ENCODE measurements at regions of chr9 and their contacts with region 1.

Region 1: GRCh38 chr9:108850293-108850897 is 5.4 kb downstream of the ACTL7B start:
- DNase-seq: peak; percentile 37
- H3K4me3 ChIP-seq: no peak overlapping the region
- H3K27ac ChIP-seq: no peak overlapping the region
- H3K4me1 ChIP-seq: peaks cover 2% of the 10 kb centered on the region
- H3K27me3 ChIP-seq: no peaks in the 10 kb centered on the region
- CTCF ChIP-seq: peak; percentile 54 to 76

Region 2: GRCh38 chr9:108885643-108886348 is 35.4 kb after region 1 on chr9:
- CTCF ChIA-PET with region 1: no interaction called
- dilution Hi-C with region 1: no loop called
- in situ Hi-C with region 1: no loop called
- intact Hi-C with region 1: loop called (anchors 5 kb)
- DNase-seq: peak; percentile 80
- H3K4me3 ChIP-seq: no peak overlapping the region
- H3K27ac ChIP-seq: peak overlapping the region; percentile 5
- H3K4me1 ChIP-seq: peaks cover 10% of the 10 kb centered on the region
- H3K27me3 ChIP-seq: no peaks in the 10 kb centered on the region
- CTCF ChIP-seq: no peak

Region 3: DNA sequence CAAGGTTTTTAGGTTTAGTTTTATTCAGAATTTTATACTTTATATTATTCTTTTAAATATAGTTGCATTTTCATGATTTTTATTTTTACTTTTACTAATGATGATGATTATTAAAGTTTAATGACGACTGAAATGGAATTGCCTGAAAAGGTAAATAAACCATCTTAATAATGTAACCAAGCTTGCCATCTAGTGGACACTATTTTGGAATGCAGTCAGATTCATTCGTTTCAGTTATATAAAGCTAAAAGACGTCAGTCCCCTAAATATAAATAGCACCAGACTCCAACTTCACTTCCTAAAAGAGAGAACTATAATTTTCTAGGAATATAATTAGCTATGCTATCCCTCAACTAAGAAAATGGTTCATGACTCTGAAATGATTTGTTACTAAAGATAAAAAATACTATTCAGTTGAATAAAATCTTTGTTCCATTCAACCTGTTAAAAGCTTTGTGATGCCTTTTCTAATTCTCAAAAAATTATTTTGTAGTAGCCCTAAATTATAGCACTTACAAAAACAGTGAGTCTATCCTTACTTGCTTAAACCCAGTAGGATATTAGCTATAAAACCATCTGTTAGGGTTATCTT is 103.7 kb after region 1 on chr9:
- CTCF ChIA-PET with region 1: no interaction called
- dilution Hi-C with region 1: no loop called
- in situ Hi-C with region 1: no loop called
- intact Hi-C with region 1: loop called (anchors 5 kb)
- DNase-seq: peak; percentile 16
- H3K4me3 ChIP-seq: no peak overlapping the region
- H3K27ac ChIP-seq: no peak overlapping the region
- H3K4me1 ChIP-seq: no peaks in the 10 kb centered on the region
- H3K27me3 ChIP-seq: no peaks in the 10 kb centered on the region
- CTCF ChIP-seq: peak; percentile 66 to 67

Region 4: GRCh38 chr9:109182940-109183798 is 332.8 kb after region 1 on chr9:
- CTCF ChIA-PET with region 1: no interaction called
- dilution Hi-C with region 1: no loop called
- in situ Hi-C with region 1: no loop called
- intact Hi-C with region 1: loop called (anchors 5 kb)
- DNase-seq: peak; percentile 60
- H3K4me3 ChIP-seq: no peak overlapping the region
- H3K27ac ChIP-seq: no peak overlapping the region
- H3K4me1 ChIP-seq: peaks cover 9% of the 10 kb centered on the region
- H3K27me3 ChIP-seq: no peaks in the 10 kb centered on the region
- CTCF ChIP-seq: peak; percentile 39 to 69